ENCODE measurements at regions of chr17 and their contacts with region 1.

Region 1: DNA sequence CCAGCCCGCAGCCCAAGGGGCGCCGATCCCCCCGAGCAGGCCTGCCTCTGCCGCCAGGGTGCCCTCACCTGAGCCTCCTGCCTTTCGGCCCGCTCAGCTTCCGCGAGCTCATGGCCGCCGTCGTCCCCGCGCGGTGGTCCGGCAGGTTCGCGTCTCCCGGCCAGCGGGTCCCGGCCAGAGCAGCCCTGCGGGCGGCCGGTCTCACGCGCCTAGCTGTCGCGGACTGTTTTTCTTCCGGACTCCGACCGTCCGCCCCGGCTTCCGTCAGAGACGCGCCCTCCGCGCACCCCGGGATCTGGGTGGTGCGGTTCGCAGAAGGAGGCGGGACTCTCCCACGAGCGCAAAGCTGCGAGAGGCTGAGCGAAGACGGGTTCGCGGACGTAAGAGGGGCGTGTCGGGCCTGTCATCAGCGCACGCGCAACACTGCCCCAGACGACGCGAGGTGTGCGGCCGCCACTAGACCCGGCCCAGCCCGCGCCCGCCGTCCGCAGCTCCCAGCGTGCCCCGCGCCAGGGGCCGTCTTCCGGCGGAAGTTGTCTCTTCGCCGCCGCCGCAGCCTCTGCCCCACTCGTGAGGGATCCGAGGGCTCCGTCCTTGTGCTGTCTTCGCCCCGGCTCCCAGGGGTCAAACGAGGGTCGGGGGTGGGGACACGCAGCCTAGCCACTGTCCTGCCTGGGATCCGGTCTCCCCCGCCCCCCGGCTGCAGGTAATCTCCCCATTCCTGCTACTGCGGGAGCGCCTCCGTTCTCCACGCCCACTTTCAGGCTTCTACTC is at the start of gene INPP5K:
- DNase-seq: peak; percentile 96
- H3K4me3 ChIP-seq: peak within 1 kb of the TSS; percentile 98
- H3K27ac ChIP-seq: peak within 1 kb of the TSS; percentile 90
- H3K27me3 ChIP-seq: no peaks in the 10 kb centered on the region
- CTCF ChIP-seq: no peak
- polyA plus RNA-seq, gene INPP5K: 23.8 and 25.9 TPM in 2 replicates

Region 2: DNA sequence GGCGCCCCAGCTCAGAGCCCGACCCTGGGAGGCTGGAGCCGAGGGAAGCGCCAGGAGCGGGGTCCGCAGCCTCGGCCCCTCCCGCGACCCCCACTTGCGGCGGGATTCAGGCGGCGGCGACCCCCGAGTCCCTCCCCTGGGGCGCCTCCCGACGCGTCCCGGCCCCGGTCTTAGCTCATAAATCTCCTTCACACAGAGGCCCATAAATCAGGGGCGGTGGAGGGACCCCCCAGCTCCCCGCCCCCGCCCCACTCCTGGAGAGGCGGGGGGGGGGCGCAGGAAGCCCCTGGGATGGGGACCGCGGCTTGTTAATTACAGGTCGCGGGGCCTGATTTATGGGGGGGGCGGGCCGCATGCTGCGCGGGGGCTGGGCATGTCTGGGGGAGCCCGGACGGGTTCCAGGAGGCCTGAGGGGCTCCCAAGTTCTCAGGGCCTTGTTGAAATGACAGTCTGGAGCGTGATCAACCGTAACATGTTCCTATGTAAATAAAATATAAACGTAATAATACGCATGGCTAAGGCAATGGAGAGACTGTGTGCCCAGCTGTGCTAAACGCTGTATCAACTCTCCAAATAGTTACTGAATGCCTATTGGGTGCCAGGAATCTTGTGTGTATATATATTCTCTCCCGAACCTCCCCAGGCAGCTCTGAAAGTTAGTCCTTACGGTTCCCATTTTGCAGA is 256.3 kb before region 1 on chr17:
- CTCF ChIA-PET with region 1: interaction called, 23 read pairs
- POLR2A ChIA-PET with region 1: no interaction called
- DNase-seq: no peak
- H3K4me3 ChIP-seq: peak overlapping the region; percentile 61
- H3K27ac ChIP-seq: no peak overlapping the region
- H3K27me3 ChIP-seq: peaks cover 6% of the 10 kb centered on the region
- CTCF ChIP-seq: no peak

Region 3: DNA sequence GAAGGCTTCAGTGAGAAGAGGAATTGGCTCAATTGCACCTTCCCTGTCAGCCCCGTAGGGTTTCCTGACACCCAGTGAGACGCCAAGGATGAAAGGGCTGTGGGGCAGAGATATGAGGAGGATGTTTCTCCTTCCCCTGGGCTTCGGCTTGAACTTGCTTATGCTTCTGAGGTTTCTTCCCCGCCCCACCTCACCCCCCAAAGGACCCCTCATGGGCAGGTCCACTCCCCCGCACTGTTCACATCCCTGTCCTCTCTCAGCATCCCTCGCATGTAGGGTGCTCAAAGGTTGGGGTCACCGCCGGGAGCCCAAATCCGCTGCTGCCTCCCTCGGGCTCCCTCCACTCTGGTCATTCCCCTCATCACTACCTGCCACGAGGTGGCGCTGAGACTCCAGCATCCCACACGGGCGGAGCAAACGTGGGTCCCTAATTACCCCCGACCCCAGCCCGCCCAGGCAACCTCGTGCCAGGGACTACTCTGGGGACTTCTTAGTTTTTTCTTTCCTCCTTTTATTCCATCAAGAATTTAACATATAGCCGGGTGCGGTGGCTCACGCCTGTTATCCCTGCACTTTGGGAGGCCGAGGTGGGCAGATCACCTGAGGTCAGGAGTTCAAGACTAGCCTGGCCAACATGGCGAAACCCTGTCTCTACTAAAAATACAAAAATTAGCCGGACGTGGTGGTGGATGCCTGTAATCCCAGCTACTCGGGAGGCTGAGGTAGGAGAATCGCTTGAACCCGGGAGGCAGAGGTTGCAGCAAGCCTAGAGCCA is 240.4 kb before region 1 on chr17:
- CTCF ChIA-PET with region 1: interaction called, 10 read pairs
- POLR2A ChIA-PET with region 1: no interaction called
- DNase-seq: no peak
- H3K4me3 ChIP-seq: no peak overlapping the region
- H3K27ac ChIP-seq: no peak overlapping the region
- H3K27me3 ChIP-seq: peaks cover 36% of the 10 kb centered on the region
- CTCF ChIP-seq: peak; percentile 85

Region 4: GRCh38 chr17:1488030-1488863 is 28.3 kb before region 1 on chr17:
- CTCF ChIA-PET with region 1: interaction called, 3 read pairs
- POLR2A ChIA-PET with region 1: interaction called, 11 read pairs
- DNase-seq: peak; percentile 67
- H3K4me3 ChIP-seq: peak overlapping the region; percentile 61
- H3K27ac ChIP-seq: peak overlapping the region; percentile 92
- H3K27me3 ChIP-seq: no peaks in the 10 kb centered on the region
- CTCF ChIP-seq: no peak

Region 5: GRCh38 chr17:1529863-1530262 is 13.3 kb after region 1 on chr17:
- CTCF ChIA-PET with region 1: interaction called, 6 read pairs
- POLR2A ChIA-PET with region 1: interaction called, 12 read pairs
- DNase-seq: no peak
- H3K4me3 ChIP-seq: no peak overlapping the region
- H3K27ac ChIP-seq: no peak overlapping the region
- H3K27me3 ChIP-seq: no peaks in the 10 kb centered on the region
- CTCF ChIP-seq: no peak

Region 6: DNA sequence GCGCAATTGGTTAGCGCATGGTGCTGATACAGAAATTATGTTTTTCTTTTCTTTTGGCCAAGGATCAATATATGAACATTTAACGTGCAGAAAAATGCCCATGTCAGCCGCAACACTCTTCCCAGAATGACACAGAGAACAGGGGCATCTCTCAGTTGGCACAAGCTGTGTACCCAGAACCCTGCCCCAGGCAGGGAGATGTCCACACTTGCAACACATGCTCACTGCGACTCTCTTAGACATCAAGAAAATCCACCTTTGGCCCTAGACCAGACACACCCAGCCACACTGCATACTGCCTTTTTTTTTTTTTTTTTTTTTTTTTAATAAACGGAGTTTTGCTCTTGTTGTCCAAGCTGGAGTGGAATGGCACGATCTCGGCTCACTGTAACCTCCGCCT is 29.0 kb after region 1 on chr17:
- CTCF ChIA-PET with region 1: no interaction called
- POLR2A ChIA-PET with region 1: no interaction called
- DNase-seq: no peak
- H3K4me3 ChIP-seq: no peak overlapping the region
- H3K27ac ChIP-seq: no peak overlapping the region
- H3K27me3 ChIP-seq: no peaks in the 10 kb centered on the region
- CTCF ChIP-seq: no peak

Region 7: DNA sequence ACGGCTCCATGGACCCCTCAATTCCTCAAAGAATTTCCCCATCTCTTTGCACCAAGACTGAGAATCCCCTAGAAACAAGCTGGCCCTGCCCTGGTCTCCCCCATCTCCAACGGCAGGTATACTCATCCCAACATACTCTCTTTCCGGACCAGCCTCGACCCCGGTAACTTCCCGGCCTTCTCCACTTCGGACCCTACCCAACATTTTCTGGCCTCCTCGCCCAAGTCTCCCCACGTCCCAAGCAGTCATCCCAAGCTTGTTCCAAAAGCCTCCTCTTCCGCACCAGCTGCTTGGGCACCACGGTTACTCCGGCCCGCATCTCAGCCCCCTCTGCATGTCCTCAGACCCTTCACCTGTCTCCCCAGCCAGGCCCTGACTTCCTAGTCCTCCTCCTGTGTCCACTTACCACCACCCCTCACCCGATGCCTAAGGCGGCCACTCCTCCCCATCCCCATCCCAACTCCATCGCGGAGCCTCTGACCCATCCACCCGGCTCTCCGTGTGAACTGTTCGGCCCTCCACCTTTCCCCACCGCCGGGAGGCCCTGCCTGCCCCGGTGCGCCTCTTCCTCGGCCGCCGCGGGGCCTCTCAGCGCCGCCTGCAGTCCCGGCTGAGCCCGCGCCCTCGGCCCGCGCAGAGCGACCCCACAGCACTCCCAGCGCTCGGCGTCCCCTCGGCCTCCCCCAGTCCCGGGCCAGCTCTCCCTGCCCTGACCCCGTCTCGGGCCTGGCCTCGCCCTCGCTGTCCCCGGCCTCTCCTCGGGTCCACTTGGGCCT is 45.0 kb after region 1 on chr17:
- CTCF ChIA-PET with region 1: no interaction called
- POLR2A ChIA-PET with region 1: interaction called, 10 read pairs
- DNase-seq: no peak
- H3K4me3 ChIP-seq: peak overlapping the region; percentile 80
- H3K27ac ChIP-seq: no peak overlapping the region
- H3K27me3 ChIP-seq: no peaks in the 10 kb centered on the region
- CTCF ChIP-seq: peak; percentile 38